MCF 10A (cell line): ENCODE measurements at regions of chr20 and their contacts with region 1.

Region 1: GRCh38 chr20:6613280-6613861 is 154.1 kb upstream of the BMP2 start:
- DNase-seq: peak; percentile 68
- H3K4me3 Mint-ChIP-seq: no peak overlapping the region
- H3K27ac Mint-ChIP-seq: peak overlapping the region; percentile 61
- H3K4me1 Mint-ChIP-seq: peaks cover 21% of the 10 kb centered on the region
- H3K27me3 Mint-ChIP-seq: no peaks in the 10 kb centered on the region
- CTCF ChIP-seq: no peak

Region 2: GRCh38 chr20:6590891-6591631 is 22.3 kb before region 1 on chr20:
- CTCF ChIA-PET with region 1: interaction called, 4 read pairs
- POLR2A ChIA-PET with region 1: interaction called, 19 read pairs
- intact Hi-C with region 1: no loop called
- DNase-seq: peak; percentile 98
- H3K4me3 Mint-ChIP-seq: peak overlapping the region; percentile 40
- H3K27ac Mint-ChIP-seq: peak overlapping the region; percentile 95
- H3K4me1 Mint-ChIP-seq: peaks cover 32% of the 10 kb centered on the region
- H3K27me3 Mint-ChIP-seq: no peaks in the 10 kb centered on the region
- CTCF ChIP-seq: no peak

Region 3: DNA sequence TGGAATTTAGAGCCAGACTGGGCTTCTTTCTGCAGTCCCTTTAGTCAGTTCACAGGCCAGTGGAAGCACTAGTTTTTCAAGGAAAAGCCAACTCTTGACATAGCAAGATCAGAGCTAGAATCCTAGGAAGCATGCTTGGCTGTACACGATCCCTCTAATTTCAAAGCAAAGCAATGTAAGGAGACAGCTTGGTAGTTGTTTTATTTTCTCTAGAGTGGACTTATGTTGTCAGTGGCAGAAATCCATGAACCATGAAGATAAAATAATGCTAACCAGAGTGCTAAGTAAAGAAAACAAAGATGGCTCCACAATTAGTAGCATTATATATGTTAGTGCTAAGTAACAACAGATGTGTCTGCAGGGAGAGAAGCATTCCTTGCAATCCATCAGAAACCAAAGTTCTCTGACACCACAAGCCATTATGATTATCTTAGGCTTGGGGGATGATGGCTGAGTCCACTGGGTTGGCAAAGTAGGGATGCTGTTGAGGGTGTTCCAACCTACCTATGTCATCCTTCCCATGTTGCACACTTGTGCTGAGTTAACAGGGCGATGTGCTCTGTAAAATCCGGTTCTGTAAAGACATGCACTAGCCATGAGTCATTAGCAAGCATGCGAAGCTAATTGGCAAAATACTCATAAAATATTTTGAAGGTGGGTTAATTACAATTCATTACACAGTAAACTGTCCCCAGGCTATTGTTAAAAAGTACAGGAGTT is 269.4 kb after region 1 on chr20:
- CTCF ChIA-PET with region 1: no interaction called
- POLR2A ChIA-PET with region 1: no interaction called
- intact Hi-C with region 1: no loop called
- DNase-seq: peak; percentile 54
- H3K4me3 Mint-ChIP-seq: no peak overlapping the region
- H3K27ac Mint-ChIP-seq: no peak overlapping the region
- H3K4me1 Mint-ChIP-seq: peaks cover 13% of the 10 kb centered on the region
- H3K27me3 Mint-ChIP-seq: no peaks in the 10 kb centered on the region
- CTCF ChIP-seq: no peak